ENCODE measurements at regions of chr20 and their contacts with region 1.

Region 1: DNA sequence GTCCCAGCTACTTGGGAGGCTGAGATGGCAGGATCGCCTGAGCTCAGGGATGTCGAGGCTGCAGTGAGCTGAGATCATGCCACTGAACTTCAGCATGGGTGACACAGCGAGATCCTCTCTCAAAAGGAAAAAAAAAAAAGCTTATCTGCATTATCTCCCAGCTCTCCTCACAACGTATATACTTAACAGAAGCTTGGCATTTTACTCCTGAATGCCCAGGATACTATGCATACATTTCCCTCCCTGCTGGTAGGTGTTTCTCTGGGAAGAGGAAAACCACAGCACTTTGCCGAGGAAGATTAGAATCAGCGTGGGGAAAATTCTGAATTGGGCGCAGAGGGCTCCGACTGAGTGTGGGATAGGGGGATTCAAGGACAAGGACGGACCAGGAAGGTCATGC is 800.6 kb downstream of the DHX35 start:
- DNase-seq: no peak
- H3K4me3 ChIP-seq: no peak overlapping the region
- H3K27ac ChIP-seq: no peak overlapping the region
- H3K4me1 ChIP-seq: no peaks in the 10 kb centered on the region
- H3K27me3 ChIP-seq: no peaks in the 10 kb centered on the region
- CTCF ChIP-seq: no peak

Region 2: DNA sequence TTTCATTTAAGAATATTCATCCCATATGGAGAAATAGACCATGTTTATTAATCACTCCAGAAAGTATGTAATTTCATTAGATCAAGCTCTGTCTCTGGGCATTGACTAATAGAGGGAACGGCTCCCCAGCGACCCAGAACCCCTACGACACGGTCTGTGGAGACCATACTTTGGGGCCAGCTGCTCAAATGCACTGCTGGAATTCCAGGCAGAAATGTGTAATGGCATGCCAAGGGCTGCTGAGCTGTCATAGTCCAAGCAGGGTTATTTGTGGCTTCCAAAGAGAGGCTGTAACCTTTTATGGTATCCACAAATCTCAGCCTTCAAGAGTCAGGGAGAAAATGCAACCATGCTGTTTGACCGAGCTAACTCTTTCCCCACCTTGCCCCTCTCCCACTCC is 44.8 kb before region 1 on chr20:
- CTCF ChIA-PET with region 1: no interaction called
- dilution Hi-C with region 1: no loop called
- in situ Hi-C with region 1: no loop called
- intact Hi-C with region 1: no loop called
- DNase-seq: no peak
- H3K4me3 ChIP-seq: no peak overlapping the region
- H3K27ac ChIP-seq: no peak overlapping the region
- H3K4me1 ChIP-seq: no peaks in the 10 kb centered on the region
- H3K27me3 ChIP-seq: no peaks in the 10 kb centered on the region
- CTCF ChIP-seq: no peak

Region 3: DNA sequence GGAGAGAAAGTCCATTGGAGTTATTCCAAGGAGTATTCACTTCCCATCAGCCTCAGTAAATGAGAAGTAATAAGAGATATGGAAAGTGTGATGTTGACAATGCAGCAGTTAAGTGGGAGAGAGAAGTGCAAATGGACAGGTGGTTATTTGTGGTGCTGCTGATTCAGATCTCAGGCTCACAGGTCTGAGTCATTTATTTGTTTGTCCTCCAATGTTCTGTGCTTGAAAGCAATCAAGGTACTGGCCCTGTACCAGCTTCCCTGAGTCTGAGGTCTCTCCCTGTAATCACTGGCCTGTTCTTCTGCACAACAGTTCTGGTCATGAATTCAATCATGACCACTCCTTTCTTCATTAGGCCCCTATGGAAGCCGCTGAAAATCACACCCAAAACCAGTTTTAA is 98.7 kb after region 1 on chr20:
- CTCF ChIA-PET with region 1: no interaction called
- dilution Hi-C with region 1: loop called (anchors 5 kb)
- in situ Hi-C with region 1: no loop called
- intact Hi-C with region 1: no loop called
- DNase-seq: no peak
- H3K4me3 ChIP-seq: no peak overlapping the region
- H3K27ac ChIP-seq: no peak overlapping the region
- H3K4me1 ChIP-seq: no peaks in the 10 kb centered on the region
- H3K27me3 ChIP-seq: no peaks in the 10 kb centered on the region
- CTCF ChIP-seq: no peak